Heart left ventricle (tissue), 16 donors: ENCODE measurements at regions of chr1 and their contacts with region 1.

Region 1: GRCh38 chr1:201254625-201255506 is 28.4 kb upstream of the PKP1 start:
- DNase-seq: peak in 4 of 5 donors; percentile 44 to 83 (median 56)
- ATAC-seq: peak; percentile 50 to 85 (median 72)
- H3K4me3 ChIP-seq: no peak overlapping the region
- H3K27ac ChIP-seq: no peak overlapping the region
- H3K4me1 ChIP-seq: peaks cover 0 to 6% (median 4%) of the 10 kb centered on the region in 12 donors
- H3K27me3 ChIP-seq: peaks cover 0 to 8% (median 6%) of the 10 kb centered on the region in 9 donors
- CTCF ChIP-seq: peak; percentile 90 to 98 (median 96)
- POLR2A ChIP-seq: no peak

Region 2: GRCh38 chr1:201184307-201185122 is 70.4 kb before region 1 on chr1:
- intact Hi-C with region 1: no loop called
- DNase-seq: peak in 4 of 5 donors; percentile 16 to 54 (median 40)
- ATAC-seq: peak; percentile 85 to 95 (median 92)
- H3K4me3 ChIP-seq: no peak overlapping the region
- H3K27ac ChIP-seq: no peak overlapping the region
- H3K4me1 ChIP-seq: peaks cover 0 to 8% (median 2%) of the 10 kb centered on the region in 12 donors
- H3K27me3 ChIP-seq: no peaks in the 10 kb centered on the region
- CTCF ChIP-seq: peak in 10 of 12 donors; percentile 26 to 66 (median 40)
- POLR2A ChIP-seq: no peak

Region 3: DNA sequence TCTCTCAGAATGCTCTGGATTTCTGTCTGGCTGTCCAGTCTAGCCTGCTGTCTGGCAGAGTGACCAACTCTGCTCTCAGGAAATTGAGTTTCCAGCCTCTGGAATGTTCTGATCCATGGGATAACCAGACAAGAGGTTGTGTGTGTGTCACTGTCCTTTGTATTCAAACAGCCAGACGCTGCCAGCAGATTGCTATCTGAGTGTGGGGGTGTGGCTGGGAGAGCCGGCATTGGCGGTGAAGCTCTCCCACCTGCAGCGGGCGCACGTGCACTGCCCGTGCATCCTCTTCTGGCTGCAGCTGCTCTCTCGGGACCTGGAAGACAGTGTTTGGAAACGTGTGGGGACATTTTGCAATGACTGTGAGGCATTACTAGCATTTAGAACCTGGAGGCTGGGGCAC is 54.6 kb after region 1 on chr1:
- intact Hi-C with region 1: loop called in 1 of 10 experiments (anchors 5 kb)
- DNase-seq: peak; percentile 75 to 84 (median 77)
- ATAC-seq: peak; percentile 54 to 86 (median 65)
- H3K4me3 ChIP-seq: no peak overlapping the region
- H3K27ac ChIP-seq: peak overlapping the region in 11 of 12 donors; percentile 17 to 81 (median 65)
- H3K4me1 ChIP-seq: peaks cover 0 to 42% (median 25%) of the 10 kb centered on the region in 12 donors
- H3K27me3 ChIP-seq: peaks cover 0 to 5% (median 0%) of the 10 kb centered on the region in 9 donors
- CTCF ChIP-seq: peak in 5 of 12 donors; percentile 20 to 43 (median 29)
- POLR2A ChIP-seq: no peak

Region 4: DNA sequence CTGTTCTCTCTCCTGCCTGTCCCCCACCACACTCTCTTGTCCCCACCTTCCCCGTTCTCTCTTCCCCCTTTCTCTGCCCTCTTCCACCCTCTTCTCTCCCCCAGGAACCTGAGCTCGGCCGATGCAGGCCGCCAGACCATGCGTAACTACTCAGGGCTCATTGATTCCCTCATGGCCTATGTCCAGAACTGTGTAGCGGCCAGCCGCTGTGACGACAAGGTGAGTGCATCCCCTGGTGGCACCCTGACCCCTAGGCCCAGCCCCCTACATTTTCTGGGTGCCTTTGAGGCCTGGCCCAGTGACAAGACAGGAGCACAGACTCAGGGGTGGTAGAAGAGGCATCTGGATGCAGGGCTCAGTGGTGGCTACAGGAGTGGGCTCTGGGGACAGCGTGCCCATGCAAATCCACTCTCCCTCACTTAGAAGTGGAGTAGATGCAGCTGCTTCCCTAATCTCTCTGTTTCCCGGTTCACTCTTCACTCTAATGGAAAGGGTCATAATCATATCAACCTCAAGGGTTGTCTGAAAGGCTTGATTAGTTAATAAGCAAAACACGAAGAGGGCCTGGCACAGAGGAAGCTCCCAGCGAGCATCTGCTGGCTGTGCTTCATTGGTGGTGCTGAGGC is 65.4 kb after region 1 on chr1:
- intact Hi-C with region 1: loop called in 1 of 10 experiments (anchors 5 kb)
- DNase-seq: no peak
- ATAC-seq: no peak
- H3K4me3 ChIP-seq: no peak overlapping the region
- H3K27ac ChIP-seq: no peak overlapping the region
- H3K4me1 ChIP-seq: no peaks in the 10 kb centered on the region
- H3K27me3 ChIP-seq: no peaks in the 10 kb centered on the region
- CTCF ChIP-seq: no peak
- POLR2A ChIP-seq: no peak

Region 5: DNA sequence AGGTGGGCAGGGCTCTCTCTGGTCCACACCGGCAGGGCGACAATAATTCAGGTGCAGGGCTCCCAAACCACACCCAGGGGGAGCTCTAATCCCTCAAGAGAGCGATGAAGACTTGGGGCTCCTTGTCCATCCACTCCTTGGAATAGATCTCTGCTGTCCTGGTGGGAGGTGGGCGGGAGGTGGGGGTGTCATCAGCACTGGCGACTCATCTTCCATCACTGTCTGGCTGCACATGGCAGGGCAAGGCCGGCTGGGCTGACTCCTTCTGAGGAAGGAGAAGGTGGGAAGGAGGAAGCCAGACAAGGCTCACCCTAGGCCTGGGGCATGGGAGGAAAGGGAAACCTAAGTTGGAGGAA is 93.3 kb after region 1 on chr1:
- intact Hi-C with region 1: loop called in 9 of 10 experiments (anchors 1 to 5 kb)
- DNase-seq: peak in 3 of 5 donors; percentile 24 to 55 (median 37)
- ATAC-seq: peak; percentile 7 to 42 (median 26)
- H3K4me3 ChIP-seq: no peak overlapping the region
- H3K27ac ChIP-seq: no peak overlapping the region
- H3K4me1 ChIP-seq: peaks cover 0 to 13% (median 0%) of the 10 kb centered on the region in 12 donors
- H3K27me3 ChIP-seq: no peaks in the 10 kb centered on the region
- CTCF ChIP-seq: peak in 11 of 12 donors; percentile 38 to 59 (median 49)
- POLR2A ChIP-seq: no peak

Region 6: GRCh38 chr1:201361652-201362504 is 107.0 kb after region 1 on chr1:
- intact Hi-C with region 1: loop called (anchors 1 to 5 kb)
- DNase-seq: peak in 3 of 5 donors; percentile 51 to 57 (median 56)
- ATAC-seq: peak in 2 of 4 donors; percentile 2 to 10
- H3K4me3 ChIP-seq: no peak overlapping the region
- H3K27ac ChIP-seq: peak overlapping the region in 5 of 12 donors; percentile 30 to 58 (median 48)
- H3K4me1 ChIP-seq: peaks cover 0 to 21% (median 3%) of the 10 kb centered on the region in 12 donors
- H3K27me3 ChIP-seq: no peaks in the 10 kb centered on the region
- CTCF ChIP-seq: peak; percentile 56 to 77 (median 71)
- POLR2A ChIP-seq: peak in 1 of 2 donors; percentile 30

Region 7: DNA sequence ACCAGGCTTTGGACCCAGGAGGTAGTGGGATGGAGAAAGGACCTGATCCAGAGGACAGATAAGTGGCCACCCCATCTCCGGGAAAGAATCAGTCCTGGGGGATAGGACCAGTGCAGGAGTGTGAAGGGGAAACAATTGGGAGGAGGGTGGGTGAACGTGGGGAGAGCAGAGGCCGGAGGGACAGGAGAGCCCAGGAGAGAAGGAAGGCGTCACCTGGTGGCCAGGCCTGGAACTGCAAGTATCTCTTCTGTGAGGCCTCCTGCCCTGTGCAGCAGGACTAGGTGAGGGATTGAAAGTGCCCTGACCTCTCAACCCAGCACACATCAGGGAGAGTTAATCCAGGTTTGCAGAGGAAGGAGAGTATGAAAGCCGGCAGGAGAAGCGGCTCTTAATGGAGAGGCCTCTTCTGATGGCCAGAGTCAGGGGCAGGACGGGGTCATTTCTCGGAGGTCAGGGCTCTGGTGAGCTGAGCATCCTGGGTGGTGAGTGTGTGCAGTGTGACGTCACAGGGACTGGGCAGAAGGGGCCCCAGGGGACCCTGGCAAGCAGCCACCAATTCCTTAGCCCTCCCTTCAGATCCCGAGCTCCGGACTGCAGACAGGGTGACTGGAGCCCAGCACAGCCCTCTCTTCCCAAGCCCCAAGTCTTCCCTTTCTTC is 153.4 kb after region 1 on chr1:
- intact Hi-C with region 1: loop called (anchors 2 to 5 kb)
- DNase-seq: peak; percentile 75 to 86 (median 83)
- ATAC-seq: peak; percentile 70 to 87 (median 80)
- H3K4me3 ChIP-seq: no peak overlapping the region
- H3K27ac ChIP-seq: peak overlapping the region in 2 of 12 donors; percentile 19 to 28
- H3K4me1 ChIP-seq: peaks cover 0 to 22% (median 4%) of the 10 kb centered on the region in 12 donors
- H3K27me3 ChIP-seq: no peaks in the 10 kb centered on the region
- CTCF ChIP-seq: peak; percentile 88 to 96 (median 93)
- POLR2A ChIP-seq: no peak

Region 8: GRCh38 chr1:201511941-201512539 is 257.2 kb after region 1 on chr1:
- intact Hi-C with region 1: loop called in 2 of 10 experiments (anchors 5 to 10 kb)
- DNase-seq: peak; percentile 76 to 82 (median 77)
- ATAC-seq: peak; percentile 54 to 87 (median 70)
- H3K4me3 ChIP-seq: peak overlapping the region in 2 of 12 donors; percentile 3 to 14
- H3K27ac ChIP-seq: peak overlapping the region; percentile 61 to 98 (median 72)
- H3K4me1 ChIP-seq: peaks cover 7 to 44% (median 28%) of the 10 kb centered on the region in 12 donors
- H3K27me3 ChIP-seq: no peaks in the 10 kb centered on the region
- CTCF ChIP-seq: no peak
- POLR2A ChIP-seq: no peak